MCF 10A (cell line): ENCODE measurements at regions of chr11 and their contacts with region 1.

Region 1: DNA sequence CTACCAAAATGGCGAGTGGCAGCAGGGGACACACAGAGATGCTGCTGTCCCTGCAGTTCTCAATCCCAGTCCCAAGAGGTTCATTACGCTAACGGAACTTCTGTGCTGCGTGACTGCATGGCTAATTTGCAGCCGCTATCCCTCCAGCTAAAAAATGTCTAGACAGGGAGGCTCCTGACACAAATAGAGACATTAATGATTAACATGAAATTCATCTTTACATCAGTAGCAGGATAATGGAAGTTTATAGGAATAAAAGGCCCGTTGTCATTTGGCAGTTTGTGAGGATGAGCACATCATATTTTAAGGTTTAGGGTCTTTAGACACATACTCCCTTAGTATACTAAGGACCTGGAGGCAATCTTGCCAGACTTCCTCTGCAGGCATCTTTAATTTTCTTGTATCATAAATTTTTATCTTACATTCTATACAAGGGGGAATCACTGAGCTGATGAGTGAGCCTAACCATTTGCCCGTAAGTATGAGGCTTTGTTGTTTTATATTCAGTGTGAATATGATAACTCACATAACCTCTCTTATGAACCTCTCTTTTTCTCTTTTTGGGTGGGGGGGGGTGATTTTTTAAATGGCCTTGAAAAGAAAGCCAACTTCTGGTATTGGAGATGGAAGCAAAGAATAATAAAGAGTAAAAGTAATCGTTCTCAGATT is 99.8 kb upstream of the OR9G4 start:
- DNase-seq: no peak
- H3K4me3 Mint-ChIP-seq: no peak overlapping the region
- H3K27ac Mint-ChIP-seq: peak overlapping the region; percentile 21
- H3K4me1 Mint-ChIP-seq: peaks cover 14% of the 10 kb centered on the region
- H3K27me3 Mint-ChIP-seq: no peaks in the 10 kb centered on the region
- CTCF ChIP-seq: no peak

Region 2: DNA sequence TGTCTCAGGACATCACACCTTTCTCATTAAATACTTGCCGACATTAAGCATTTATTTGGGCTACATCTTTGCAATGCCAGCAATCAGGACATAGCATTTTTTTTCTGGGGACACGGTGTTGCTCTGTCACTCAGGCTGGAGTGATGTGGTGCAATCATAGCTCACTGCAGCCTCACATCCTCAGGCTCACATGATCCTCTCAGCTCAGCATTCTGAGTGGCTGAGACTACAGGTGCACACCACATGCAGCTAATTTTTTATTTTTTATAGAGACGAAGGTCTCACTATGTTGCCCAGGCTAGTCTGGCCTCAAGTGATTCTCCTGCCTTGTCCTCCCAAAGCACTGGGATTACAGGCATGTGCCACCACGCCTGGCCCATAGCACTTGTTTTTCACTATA is 127.8 kb before region 1 on chr11:
- CTCF ChIA-PET with region 1: no interaction called
- POLR2A ChIA-PET with region 1: no interaction called
- intact Hi-C with region 1: no loop called
- DNase-seq: no peak
- H3K4me3 Mint-ChIP-seq: no peak overlapping the region
- H3K27ac Mint-ChIP-seq: no peak overlapping the region
- H3K4me1 Mint-ChIP-seq: no peaks in the 10 kb centered on the region
- H3K27me3 Mint-ChIP-seq: no peaks in the 10 kb centered on the region
- CTCF ChIP-seq: no peak

Region 3: DNA sequence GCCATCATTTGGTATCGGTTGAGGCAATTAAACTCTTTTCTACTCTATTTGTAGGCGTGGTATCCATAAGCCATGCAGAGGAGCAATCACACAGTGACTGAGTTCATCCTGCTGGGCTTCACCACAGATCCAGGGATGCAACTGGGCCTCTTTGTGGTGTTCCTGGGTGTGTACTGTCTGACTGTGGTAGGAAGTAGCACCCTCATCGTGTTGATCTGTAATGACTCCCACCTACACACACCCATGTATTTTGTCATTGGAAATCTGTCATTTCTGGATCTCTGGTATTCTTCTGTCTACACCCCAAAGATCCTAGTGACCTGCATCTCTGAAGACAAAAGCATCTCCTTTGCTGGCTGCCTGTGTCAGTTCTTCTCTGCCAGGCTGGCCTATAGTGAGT is 108.2 kb before region 1 on chr11:
- CTCF ChIA-PET with region 1: no interaction called
- POLR2A ChIA-PET with region 1: no interaction called
- intact Hi-C with region 1: no loop called
- DNase-seq: no peak
- H3K4me3 Mint-ChIP-seq: no peak overlapping the region
- H3K27ac Mint-ChIP-seq: no peak overlapping the region
- H3K4me1 Mint-ChIP-seq: no peaks in the 10 kb centered on the region
- H3K27me3 Mint-ChIP-seq: no peaks in the 10 kb centered on the region
- CTCF ChIP-seq: no peak

Region 4: GRCh38 chr11:56890584-56891305 is 42.5 kb after region 1 on chr11:
- CTCF ChIA-PET with region 1: no interaction called
- POLR2A ChIA-PET with region 1: interaction called, 10 read pairs
- intact Hi-C with region 1: no loop called
- DNase-seq: no peak
- H3K4me3 Mint-ChIP-seq: no peak overlapping the region
- H3K27ac Mint-ChIP-seq: peak overlapping the region; percentile 52
- H3K4me1 Mint-ChIP-seq: peaks cover 29% of the 10 kb centered on the region
- H3K27me3 Mint-ChIP-seq: no peaks in the 10 kb centered on the region
- CTCF ChIP-seq: no peak

Region 5: GRCh38 chr11:56910785-56911184 is 62.5 kb after region 1 on chr11:
- CTCF ChIA-PET with region 1: interaction called, 3 read pairs
- POLR2A ChIA-PET with region 1: interaction called, 21 read pairs
- intact Hi-C with region 1: no loop called
- DNase-seq: peak; percentile 43
- H3K4me3 Mint-ChIP-seq: no peak overlapping the region
- H3K27ac Mint-ChIP-seq: peak overlapping the region; percentile 42
- H3K4me1 Mint-ChIP-seq: peaks cover 20% of the 10 kb centered on the region
- H3K27me3 Mint-ChIP-seq: no peaks in the 10 kb centered on the region
- CTCF ChIP-seq: no peak